ENCODE measurements at regions of chr1 and their contacts with region 1.

Region 1: DNA sequence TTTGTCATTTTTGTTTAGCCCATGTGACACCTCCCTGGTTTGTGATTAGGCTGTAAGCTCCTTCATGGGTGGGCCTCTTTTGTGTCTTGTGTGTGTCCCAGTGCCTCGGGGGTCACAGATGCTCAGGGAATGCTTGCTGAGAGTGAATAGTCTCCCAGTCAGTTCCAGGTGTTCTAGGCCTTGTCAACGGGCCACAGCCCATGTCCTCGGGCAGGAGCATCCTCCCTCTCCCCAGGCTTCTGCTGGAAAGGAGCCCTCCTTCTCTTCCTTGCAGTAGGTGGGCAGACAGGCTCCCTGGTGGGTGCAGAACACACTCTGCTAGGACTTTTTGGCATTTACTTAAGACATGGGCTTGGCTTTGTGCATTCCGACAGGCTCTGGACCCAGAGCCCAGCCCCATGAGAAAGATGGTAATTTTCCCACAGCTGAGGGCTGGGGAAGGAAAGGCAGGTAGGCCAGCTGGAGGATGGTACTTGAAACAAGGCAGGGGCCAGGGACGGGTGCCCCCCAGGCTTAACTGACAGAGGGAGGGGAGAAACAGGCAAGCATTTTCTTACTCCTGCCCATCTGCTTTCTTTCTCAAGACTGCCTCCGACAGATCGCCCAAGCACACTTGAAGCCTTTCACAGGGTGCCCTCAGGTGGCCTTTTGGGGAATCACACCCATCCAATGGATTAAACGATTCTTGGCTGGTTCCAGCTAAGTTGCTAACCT is 7.1 kb upstream of the CPLANE2 start:
- DNase-seq: peak; percentile 60
- H3K4me3 Mint-ChIP-seq: no peak overlapping the region
- H3K27ac Mint-ChIP-seq: no peak overlapping the region
- H3K4me1 Mint-ChIP-seq: peaks cover 5% of the 10 kb centered on the region
- H3K27me3 Mint-ChIP-seq: no peaks in the 10 kb centered on the region

Region 2: DNA sequence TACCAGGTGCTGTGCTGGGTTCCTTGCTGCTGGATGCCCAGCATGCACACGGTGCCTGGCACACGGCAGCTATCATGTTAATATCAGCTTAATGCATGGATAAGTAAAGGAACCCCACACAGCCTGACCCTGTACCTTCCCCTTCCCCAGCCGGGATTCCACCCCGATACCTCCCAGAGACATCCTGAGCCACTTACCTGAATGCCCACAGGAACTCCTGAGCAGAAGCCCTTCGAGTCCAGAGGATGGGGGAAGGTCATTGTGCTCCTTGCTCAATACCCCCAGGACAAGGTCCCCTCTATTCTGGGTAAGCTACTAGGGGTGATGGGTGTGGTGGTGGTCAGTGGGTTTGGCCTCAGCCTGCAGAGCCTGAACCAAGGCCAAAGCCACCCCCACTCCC is 172.0 kb before region 1 on chr1:
- intact Hi-C with region 1: no loop called
- DNase-seq: no peak
- H3K4me3 Mint-ChIP-seq: no peak overlapping the region
- H3K27ac Mint-ChIP-seq: no peak overlapping the region
- H3K4me1 Mint-ChIP-seq: peaks cover 18% of the 10 kb centered on the region
- H3K27me3 Mint-ChIP-seq: peaks cover 25% of the 10 kb centered on the region

Region 3: GRCh38 chr1:16167331-16168143 is 76.6 kb before region 1 on chr1:
- intact Hi-C with region 1: no loop called
- DNase-seq: peak; percentile 40
- H3K4me3 Mint-ChIP-seq: no peak overlapping the region
- H3K27ac Mint-ChIP-seq: no peak overlapping the region
- H3K4me1 Mint-ChIP-seq: peaks cover 25% of the 10 kb centered on the region
- H3K27me3 Mint-ChIP-seq: peaks cover 37% of the 10 kb centered on the region

Region 4: DNA sequence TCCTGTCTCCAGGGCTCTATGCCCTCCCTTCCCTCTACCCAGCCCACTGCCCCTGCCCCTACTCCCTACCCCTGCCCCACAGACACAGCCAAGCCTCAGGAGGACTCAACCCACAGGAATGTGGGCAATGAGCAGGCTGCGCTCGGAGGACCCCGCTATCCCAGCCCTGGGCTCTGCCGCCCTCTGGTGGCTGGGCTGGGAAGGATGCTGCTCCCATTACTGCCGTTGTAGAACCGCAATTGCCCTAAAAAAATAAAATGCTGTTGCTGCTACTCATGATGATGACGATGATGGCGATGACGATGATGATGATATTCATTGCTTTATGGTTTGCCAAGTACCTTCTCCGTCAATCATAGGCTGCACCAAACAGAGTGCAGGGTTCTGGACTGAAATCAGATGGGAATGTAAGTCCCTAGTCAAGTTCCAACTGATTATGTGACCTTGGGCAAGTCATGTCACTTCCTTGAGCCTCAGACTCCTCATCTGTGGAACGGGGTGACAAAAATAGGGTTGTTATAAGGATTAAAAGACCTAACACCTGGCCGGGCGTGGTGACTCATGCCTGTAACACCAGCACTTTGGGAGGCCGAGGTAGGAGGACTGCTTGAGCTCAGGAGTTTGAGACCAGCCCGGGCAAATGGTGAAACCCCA is 56.2 kb before region 1 on chr1:
- intact Hi-C with region 1: loop called (anchors 5 kb)
- DNase-seq: peak; percentile 61
- H3K4me3 Mint-ChIP-seq: no peak overlapping the region
- H3K27ac Mint-ChIP-seq: no peak overlapping the region
- H3K4me1 Mint-ChIP-seq: peaks cover 4% of the 10 kb centered on the region
- H3K27me3 Mint-ChIP-seq: peaks cover 15% of the 10 kb centered on the region

Measured in activated T-helper 2 cell treated with anti-CD3 and anti-CD28 coated beads, Interferon-gamma antibody, Interleukin-2, Interleukin-4, amounts not matched to agents 10 μg/mL and 5 μg/mL and 100 μg/mL, durations not matched to agents 14 hours and 24 hours and 36 hours (primary cell).